Vagina (tissue), 2 donors: ENCODE measurements at regions of chrX and their contacts with region 1.

Region 1: DNA sequence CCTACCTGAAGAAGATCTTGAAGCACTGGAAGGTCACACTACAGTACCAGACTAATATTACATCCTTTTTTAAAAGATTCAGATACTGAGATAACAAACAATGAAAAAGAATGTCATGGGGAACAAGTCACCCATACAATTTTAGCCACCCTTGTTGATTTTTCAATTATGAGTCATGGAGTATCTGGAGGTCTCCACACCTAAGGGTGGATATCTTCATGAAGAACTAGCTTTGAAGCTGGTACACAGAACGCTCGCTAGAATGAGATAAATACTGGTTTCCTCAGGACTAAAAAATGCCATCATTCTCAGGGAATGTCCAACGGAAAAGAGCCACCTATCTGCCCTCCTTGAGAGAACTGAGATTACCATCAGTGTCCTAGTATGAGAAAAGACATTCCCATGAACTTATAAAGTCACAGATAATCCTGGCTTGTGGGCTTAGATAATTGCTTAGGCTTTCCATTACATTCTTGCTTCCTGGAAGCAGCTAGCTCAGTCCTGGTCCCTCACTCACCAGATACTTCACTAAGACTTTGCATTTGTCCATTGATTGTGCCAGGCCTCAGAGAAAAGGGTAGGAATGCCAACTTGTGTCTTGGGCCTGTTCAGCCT is 166.7 kb downstream of the OR13H1 start:
- DNase-seq: no peak
- H3K4me3 ChIP-seq: no peak overlapping the region
- H3K27ac ChIP-seq: no peak overlapping the region
- H3K4me1 ChIP-seq: no peaks in the 10 kb centered on the region
- H3K27me3 ChIP-seq: no peaks in the 10 kb centered on the region
- CTCF ChIP-seq: no peak
- POLR2A ChIP-seq: no peak

Region 2: GRCh38 chrX:131752489-131753198 is 42.1 kb after region 1 on chrX:
- intact Hi-C with region 1: loop called (anchors 2 kb)
- DNase-seq: no peak
- H3K4me3 ChIP-seq: peak overlapping the region; percentile 45 to 48
- H3K27ac ChIP-seq: peak overlapping the region; percentile 49
- H3K4me1 ChIP-seq: no peaks in the 10 kb centered on the region
- H3K27me3 ChIP-seq: no peaks in the 10 kb centered on the region
- CTCF ChIP-seq: no peak
- POLR2A ChIP-seq: no peak

Region 3: GRCh38 chrX:131792789-131793462 is 82.4 kb after region 1 on chrX:
- intact Hi-C with region 1: loop called (anchors 5 kb)
- DNase-seq: no peak
- H3K4me3 ChIP-seq: peak overlapping the region; percentile 42 to 45
- H3K27ac ChIP-seq: peak overlapping the region; percentile 79
- H3K4me1 ChIP-seq: no peaks in the 10 kb centered on the region
- H3K27me3 ChIP-seq: no peaks in the 10 kb centered on the region
- CTCF ChIP-seq: peak; percentile 27 to 59 (median 32)
- POLR2A ChIP-seq: no peak

Region 4: DNA sequence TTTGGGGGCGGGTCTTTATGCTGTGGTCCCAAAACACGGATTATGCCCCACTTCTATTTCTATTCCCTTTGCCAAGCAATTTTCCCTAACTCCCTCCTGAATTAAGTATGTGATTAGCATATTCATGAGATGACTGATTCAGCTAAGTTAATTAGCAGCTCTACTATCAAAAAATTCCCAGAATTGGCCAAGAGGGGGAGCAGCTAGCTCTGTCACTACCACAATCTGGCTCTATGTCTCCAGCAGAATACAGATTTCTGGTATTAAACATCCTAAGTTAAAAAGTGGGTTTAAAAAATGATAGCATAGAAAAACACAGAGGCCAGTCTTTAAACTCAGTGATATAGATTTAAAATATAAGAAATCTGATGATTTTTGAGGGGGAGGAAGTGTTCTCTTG is 1624.5 kb after region 1 on chrX:
- intact Hi-C with region 1: no loop called
- DNase-seq: no peak
- H3K4me3 ChIP-seq: no peak overlapping the region
- H3K27ac ChIP-seq: no peak overlapping the region
- H3K4me1 ChIP-seq: no peaks in the 10 kb centered on the region
- H3K27me3 ChIP-seq: no peaks in the 10 kb centered on the region
- CTCF ChIP-seq: peak in 1 of 3 experiments; percentile 21
- POLR2A ChIP-seq: no peak